ENCODE measurements at regions of chr20 and their contacts with region 1.

Region 1: GRCh38 chr20:51385646-51386530 is 156.6 kb downstream of the NFATC2 start:
- DNase-seq: peak; percentile 67
- H3K4me3 ChIP-seq: no peak overlapping the region
- H3K27ac ChIP-seq: no peak overlapping the region
- H3K4me1 ChIP-seq: peaks cover 63% of the 10 kb centered on the region
- H3K27me3 ChIP-seq: no peaks in the 10 kb centered on the region
- CTCF ChIP-seq: peak; percentile 52 to 78
- POLR2A ChIP-seq: no peak

Region 2: GRCh38 chr20:51162015-51162414 is 223.9 kb before region 1 on chr20:
- CTCF ChIA-PET with region 1: no interaction called
- POLR2A ChIA-PET with region 1: no interaction called
- dilution Hi-C with region 1: no loop called
- intact Hi-C with region 1: no loop called
- DNase-seq: no peak
- H3K4me3 ChIP-seq: no peak overlapping the region
- H3K27ac ChIP-seq: no peak overlapping the region
- H3K4me1 ChIP-seq: no peaks in the 10 kb centered on the region
- H3K27me3 ChIP-seq: peaks cover 6 to 10% of the 10 kb centered on the region in 2 experiments
- CTCF ChIP-seq: no peak
- POLR2A ChIP-seq: no peak

Region 3: DNA sequence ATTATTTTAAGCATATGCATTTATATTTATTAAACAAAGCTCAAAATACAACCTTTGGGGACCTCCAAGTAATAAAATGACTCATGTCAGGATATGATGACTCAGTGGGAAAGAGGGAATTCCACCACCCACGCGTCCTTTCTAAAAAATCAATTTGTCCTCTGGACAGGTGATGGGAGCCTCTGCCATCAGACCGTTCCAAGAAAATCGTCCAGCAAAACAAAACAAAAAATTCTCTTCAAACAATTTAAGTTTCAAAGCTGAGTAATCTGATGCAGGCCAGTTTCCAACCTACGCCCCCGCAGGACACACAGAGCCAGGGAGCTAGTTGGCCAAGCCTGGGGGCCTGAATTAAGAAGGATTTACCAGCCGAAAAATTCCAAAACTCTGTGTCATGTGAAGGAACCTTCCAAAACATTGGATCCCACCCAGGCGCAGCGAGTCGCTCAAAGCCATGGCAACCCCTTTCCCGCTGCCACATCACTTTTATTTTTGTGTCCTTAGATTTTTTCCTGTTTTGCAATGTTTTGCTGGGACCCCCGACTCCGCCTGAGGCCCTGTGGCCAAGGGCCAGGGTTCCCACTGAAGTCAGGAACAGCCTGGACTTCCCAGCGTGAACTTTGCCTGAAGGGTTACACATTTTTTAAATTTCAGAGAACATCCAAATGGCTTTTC is 61.3 kb after region 1 on chr20:
- CTCF ChIA-PET with region 1: interaction called, 13 read pairs
- POLR2A ChIA-PET with region 1: no interaction called
- dilution Hi-C with region 1: no loop called
- intact Hi-C with region 1: loop called (anchors 1 kb)
- DNase-seq: peak; percentile 95
- H3K4me3 ChIP-seq: peak overlapping the region in 1 of 3 experiments; percentile 3
- H3K27ac ChIP-seq: peak overlapping the region; percentile 83
- H3K4me1 ChIP-seq: peaks cover 20% of the 10 kb centered on the region
- H3K27me3 ChIP-seq: no peaks in the 10 kb centered on the region
- CTCF ChIP-seq: no peak
- POLR2A ChIP-seq: no peak

Region 4: DNA sequence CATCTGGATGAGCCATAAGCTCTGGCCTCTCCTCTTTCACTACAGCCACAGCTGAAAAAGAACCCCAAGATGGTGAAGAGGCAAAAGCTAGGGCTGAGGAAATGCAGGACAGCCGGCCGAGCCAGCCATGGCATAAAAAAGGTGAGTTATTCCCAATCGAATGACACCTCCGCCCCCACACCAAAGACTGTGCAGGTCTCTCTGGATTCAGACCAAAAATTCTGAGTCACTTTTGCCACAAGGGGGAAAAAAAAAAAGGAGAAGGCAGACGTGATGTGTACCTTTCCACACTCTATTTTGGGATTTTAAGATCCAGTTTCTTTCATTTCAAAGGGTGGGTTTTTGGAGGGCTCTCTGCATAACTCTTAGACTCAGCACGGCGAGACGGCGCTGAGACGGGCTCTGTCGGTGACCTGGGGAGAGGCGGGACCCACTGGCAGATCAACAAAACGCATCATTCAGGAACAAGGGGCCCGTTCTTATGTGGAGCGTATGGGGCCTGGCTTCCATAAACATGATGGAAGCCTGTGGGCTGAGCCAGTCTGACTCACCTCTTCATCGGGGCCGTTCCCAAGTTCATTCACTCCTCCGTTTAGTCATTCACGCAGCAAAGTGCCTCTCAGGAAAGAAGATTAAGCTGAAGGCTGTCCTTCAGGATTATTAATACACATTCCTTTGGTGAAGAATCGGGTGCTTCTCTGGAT is 101.8 kb after region 1 on chr20:
- CTCF ChIA-PET with region 1: interaction called, 5 read pairs
- POLR2A ChIA-PET with region 1: no interaction called
- dilution Hi-C with region 1: no loop called
- intact Hi-C with region 1: loop called (anchors 5 kb)
- DNase-seq: peak; percentile 50
- H3K4me3 ChIP-seq: no peak overlapping the region
- H3K27ac ChIP-seq: peak overlapping the region; percentile 15
- H3K4me1 ChIP-seq: peaks cover 23% of the 10 kb centered on the region
- H3K27me3 ChIP-seq: no peaks in the 10 kb centered on the region
- CTCF ChIP-seq: no peak
- POLR2A ChIP-seq: no peak

Region 5: GRCh38 chr20:51562332-51563155 is 176.7 kb after region 1 on chr20:
- CTCF ChIA-PET with region 1: interaction called, 17 read pairs
- POLR2A ChIA-PET with region 1: no interaction called
- dilution Hi-C with region 1: no loop called
- intact Hi-C with region 1: no loop called
- DNase-seq: peak; percentile 98
- H3K4me3 ChIP-seq: peak overlapping the region; percentile 40 to 62 (median 54)
- H3K27ac ChIP-seq: peak overlapping the region; percentile 64
- H3K4me1 ChIP-seq: peaks cover 24% of the 10 kb centered on the region
- H3K27me3 ChIP-seq: peaks cover 1 to 2% of the 10 kb centered on the region in 2 experiments
- CTCF ChIP-seq: peak; percentile 12
- POLR2A ChIP-seq: no peak

Region 6: DNA sequence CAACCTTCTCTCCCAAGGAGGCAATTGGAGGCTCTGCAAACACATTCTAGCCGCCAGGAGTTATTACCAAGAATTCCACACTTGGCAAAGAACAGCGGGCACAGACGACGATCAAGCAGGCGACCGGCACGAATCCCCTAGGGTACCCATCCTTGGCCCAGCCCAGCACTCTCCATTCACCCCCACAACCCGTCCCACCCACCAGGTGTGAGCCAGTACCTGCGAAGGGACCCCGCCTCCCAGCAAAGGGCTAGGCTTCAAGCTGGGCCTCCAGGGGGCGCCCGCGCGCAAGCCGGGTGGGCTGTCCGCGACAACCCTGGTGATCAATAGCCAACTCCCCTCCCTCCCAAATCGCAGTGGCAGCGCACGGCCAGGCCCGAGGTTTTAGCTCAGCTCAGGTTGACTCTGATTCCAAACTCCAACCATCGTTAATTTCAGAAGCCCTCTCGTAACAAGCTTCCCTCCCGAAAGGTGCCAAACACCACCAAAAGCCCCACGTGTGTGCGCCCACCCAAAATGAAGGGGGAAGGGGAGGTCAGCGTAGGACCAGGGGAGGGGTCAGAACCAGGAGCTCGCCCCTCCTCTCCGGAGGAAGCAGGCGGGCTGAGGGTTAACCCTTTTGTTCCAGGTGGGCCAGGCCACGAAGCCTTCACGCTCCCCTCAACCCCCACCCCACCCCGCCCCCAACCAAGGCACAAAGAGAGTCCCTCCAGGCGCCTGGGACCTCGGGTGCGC is 414.3 kb after region 1 on chr20:
- CTCF ChIA-PET with region 1: no interaction called
- POLR2A ChIA-PET with region 1: no interaction called
- dilution Hi-C with region 1: no loop called
- intact Hi-C with region 1: no loop called
- DNase-seq: peak; percentile 62
- H3K4me3 ChIP-seq: peak overlapping the region; percentile 49 to 80 (median 78)
- H3K27ac ChIP-seq: no peak overlapping the region
- H3K4me1 ChIP-seq: peaks cover 14% of the 10 kb centered on the region
- H3K27me3 ChIP-seq: peaks cover 10 to 30% of the 10 kb centered on the region in 2 experiments
- CTCF ChIP-seq: peak; percentile 95 to 99
- POLR2A ChIP-seq: no peak